Upper lobe of right lung (tissue), 1 donor: ENCODE measurements at regions of chr11 and their contacts with region 1.

Region 1: GRCh38 chr11:10659339-10660216 is 34.0 kb downstream of the IRAG1 start:
- DNase-seq: peak; percentile 81
- ATAC-seq: peak; percentile 85
- H3K4me3 ChIP-seq: no peak overlapping the region
- H3K27ac ChIP-seq: peak overlapping the region; percentile 82
- H3K4me1 ChIP-seq: peaks cover 66% of the 10 kb centered on the region
- H3K27me3 ChIP-seq: no peaks in the 10 kb centered on the region
- CTCF ChIP-seq: no peak

Region 2: GRCh38 chr11:10405855-10406592 is 253.6 kb before region 1 on chr11:
- intact Hi-C with region 1: loop called (anchors 10 kb)
- DNase-seq: no peak
- ATAC-seq: peak; percentile 94
- H3K4me3 ChIP-seq: no peak overlapping the region
- H3K27ac ChIP-seq: no peak overlapping the region
- H3K4me1 ChIP-seq: peaks cover 17% of the 10 kb centered on the region
- H3K27me3 ChIP-seq: no peaks in the 10 kb centered on the region
- CTCF ChIP-seq: peak; percentile 72

Region 3: DNA sequence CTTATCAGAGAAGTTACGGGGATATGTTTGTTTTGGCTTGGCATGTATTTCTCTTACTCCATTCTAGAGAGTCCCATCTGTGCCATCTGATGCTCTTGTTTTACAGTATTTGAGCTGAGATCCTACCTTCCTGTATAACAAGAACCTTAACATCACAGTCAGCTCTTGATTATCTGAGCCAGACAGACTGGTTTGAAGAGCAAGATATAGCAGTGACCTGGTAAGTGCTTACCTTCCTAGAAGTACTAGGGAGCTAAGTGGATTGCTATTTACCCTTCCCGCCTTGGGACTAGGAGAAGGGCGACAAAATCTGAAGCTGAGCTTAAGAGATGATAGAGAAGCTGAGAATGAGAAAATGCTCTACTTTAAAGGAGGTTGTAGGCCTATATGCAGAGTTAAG is 458.2 kb after region 1 on chr11:
- intact Hi-C with region 1: no loop called
- DNase-seq: no peak
- ATAC-seq: peak; percentile 79
- H3K4me3 ChIP-seq: no peak overlapping the region
- H3K27ac ChIP-seq: no peak overlapping the region
- H3K4me1 ChIP-seq: no peaks in the 10 kb centered on the region
- H3K27me3 ChIP-seq: no peaks in the 10 kb centered on the region
- CTCF ChIP-seq: no peak